IMR-90 (cell line): ENCODE measurements at regions of chr3 and their contacts with region 1.

Region 1: DNA sequence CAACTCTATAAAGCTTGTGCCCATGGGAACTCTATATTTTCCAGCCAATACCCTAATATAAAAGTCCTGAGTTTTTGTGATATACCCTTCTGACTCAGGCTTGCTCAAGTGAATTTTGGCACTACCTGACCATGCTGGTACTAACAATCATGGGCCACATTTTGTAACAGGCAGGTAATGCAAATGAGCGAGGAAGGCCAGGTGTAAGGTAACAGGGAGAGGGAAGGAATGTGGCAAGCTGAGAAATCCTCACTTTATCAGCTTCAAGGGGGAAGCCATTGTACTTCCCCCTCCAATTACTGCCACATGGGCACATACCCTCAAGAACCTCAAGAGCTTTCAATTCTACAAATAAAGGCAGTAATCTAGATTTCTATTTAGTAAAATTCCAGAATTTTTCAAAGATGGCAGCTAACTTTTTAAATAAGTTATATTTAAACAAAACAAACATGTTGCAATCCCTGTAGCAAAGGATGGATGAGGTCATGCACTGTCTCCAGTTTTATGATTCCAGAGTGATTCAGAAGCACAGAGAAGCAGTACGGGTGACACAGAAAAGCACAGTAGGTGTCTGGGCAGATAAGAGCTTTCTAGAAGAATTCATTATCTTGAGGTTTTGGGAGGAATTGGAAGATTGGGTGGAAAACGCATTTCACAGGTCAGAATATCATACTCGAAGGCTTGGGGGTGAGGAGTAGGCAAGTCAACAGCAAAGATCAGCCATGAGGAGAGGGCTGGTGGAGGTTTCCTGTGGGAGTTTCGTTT is 87.6 kb downstream of the FOXP1 start:
- DNase-seq: peak; percentile 91
- ATAC-seq: peak; percentile 84
- H3K4me3 ChIP-seq: peak overlapping the region; percentile 9; the same call in 1 of the 2 replicates
- H3K27ac ChIP-seq: peak overlapping the region; percentile 48
- H3K4me1 ChIP-seq: peaks cover 15% of the 10 kb centered on the region
- H3K27me3 ChIP-seq: no peaks in the 10 kb centered on the region
- CTCF ChIP-seq: no peak
- POLR2A ChIP-seq: no peak
- RAD21 ChIP-seq: no peak

Region 2: DNA sequence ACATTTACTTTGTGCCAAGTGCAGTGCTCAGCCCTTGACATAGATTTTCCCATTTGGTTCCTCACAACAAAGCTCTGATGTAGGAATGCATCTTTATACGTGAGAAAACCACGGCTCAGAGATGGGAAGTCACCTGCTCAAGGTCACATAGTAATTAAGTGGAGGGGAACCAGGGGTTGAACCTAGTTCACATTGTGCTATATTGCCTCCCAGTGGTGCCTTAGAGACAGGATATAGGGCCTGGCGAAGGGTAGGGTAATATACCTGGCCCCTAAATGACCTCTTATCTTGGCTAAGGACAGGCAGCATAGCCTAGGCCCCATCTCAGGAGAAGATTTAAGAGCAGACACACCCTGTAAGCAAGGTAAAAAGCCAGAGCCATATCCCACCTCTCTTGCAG is 16.1 kb after region 1 on chr3:
- CTCF ChIA-PET with region 1: no interaction called
- POLR2A ChIA-PET with region 1: no interaction called
- dilution Hi-C with region 1: no loop called
- in situ Hi-C with region 1: no loop called
- intact Hi-C with region 1: no loop called
- DNase-seq: no peak
- ATAC-seq: no peak
- H3K4me3 ChIP-seq: no peak overlapping the region
- H3K27ac ChIP-seq: no peak overlapping the region
- H3K4me1 ChIP-seq: peaks cover 7% of the 10 kb centered on the region
- H3K27me3 ChIP-seq: no peaks in the 10 kb centered on the region
- CTCF ChIP-seq: no peak; the same call in 1 of the 2 replicates
- POLR2A ChIP-seq: no peak
- RAD21 ChIP-seq: no peak

Region 3: GRCh38 chr3:71537211-71537611 is 41.3 kb after region 1 on chr3:
- CTCF ChIA-PET with region 1: no interaction called
- POLR2A ChIA-PET with region 1: no interaction called
- dilution Hi-C with region 1: no loop called
- in situ Hi-C with region 1: no loop called
- intact Hi-C with region 1: loop called (anchors 5 kb)
- DNase-seq: peak; percentile 96
- ATAC-seq: peak; percentile 76
- H3K4me3 ChIP-seq: no peak overlapping the region
- H3K27ac ChIP-seq: peak overlapping the region; percentile 60; the same call in 1 of the 2 replicates
- H3K4me1 ChIP-seq: peaks cover 18% of the 10 kb centered on the region
- H3K27me3 ChIP-seq: no peaks in the 10 kb centered on the region
- CTCF ChIP-seq: no peak
- POLR2A ChIP-seq: no peak
- RAD21 ChIP-seq: no peak; the same call in 1 of the 2 replicates